AG04450 (cell line): ENCODE measurements at regions of chr10 and their contacts with region 1.

Region 1: DNA sequence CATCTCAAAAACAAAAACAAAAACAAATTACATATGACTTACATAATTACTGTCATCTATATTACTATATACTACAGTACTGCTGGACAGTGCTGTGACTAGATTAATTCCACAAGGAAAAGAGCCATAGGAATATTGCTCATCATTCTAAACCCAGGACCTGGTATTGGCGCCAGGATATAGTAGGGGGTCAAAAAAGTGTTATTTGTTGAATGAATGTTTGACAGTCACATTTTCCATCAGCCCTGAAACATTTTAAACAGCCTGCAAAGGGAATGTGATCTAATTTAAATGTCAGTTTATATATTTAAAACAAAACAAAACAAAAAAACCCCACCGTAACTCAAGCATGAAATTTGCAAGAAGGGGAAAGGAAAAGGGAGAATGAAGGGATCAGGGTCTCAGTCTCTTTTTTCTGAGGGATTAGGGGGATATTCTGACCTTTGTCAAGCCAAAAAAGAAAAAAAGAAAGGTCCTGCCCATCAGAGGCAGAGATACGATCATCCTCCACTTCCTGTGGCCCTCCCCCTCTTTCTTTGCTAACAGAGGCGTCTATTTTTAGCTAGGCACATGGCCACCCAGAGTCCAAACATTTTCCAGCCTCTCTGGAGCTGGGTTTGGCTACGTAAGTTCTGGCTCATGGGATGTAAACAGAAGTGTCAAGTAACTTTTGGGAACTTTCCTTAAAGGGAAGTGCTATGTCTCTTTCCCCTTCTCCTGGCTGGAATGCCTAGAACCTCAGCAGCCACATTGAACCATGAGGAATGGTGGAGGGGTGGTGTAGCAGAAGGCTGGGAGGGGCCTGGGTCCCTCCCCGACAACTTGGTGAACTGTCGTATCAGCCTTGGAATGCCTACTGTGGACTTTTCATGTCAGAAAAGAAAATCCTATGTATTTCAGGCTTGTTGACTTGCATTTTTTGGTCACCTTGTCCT is 44.6 kb upstream of the DLG5 start:
- DNase-seq: peak; percentile 93
- H3K4me3 ChIP-seq: peak overlapping the region; percentile 48
- H3K27ac ChIP-seq: peak overlapping the region; percentile 82
- H3K27me3 ChIP-seq: no peaks in the 10 kb centered on the region
- CTCF ChIP-seq: no peak

Region 2: DNA sequence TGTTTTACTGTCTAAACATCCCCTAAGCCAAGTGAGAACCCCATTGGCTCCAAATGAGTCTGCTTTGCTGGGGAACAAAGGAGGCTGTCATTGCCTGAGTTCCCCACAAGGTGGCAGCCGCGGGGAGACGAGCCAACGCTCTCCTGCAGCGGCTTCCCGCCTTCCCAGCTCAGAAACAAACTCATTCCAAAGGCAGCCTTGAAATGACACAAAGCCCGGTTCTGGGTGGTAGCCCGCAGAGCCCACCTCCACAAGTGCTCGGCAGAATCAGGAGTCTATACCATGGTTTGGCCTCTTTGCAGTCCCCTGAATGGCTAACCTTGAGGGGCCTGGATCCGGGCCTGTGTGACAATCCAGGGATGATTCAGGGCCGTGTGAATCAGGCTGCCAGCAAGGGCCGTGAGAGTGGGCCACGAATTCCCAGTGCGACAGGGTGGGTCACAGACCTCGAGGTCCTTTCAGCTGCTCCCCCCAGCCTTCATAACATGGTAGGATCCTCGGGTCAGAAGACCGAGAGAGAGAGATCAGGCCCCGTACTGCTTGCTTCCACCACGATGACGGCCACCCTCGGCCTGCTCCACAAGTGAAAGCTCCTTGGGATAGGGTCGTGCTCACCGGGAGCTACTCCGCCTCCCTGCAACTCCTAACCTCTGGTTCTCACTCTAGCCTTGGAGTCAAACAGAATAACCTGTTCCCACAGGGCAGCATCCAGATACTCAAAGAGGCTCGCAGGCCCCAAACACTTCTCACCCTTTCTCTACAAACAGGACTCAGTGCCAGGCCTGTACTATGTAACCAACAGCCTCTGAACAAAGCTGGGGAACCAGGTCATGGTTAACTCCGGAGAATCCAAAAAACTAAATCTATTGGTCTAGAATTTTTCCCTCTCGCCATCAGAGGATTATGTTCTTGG is 124.2 kb before region 1 on chr10:
- CTCF ChIA-PET with region 1: interaction called, 11 read pairs
- POLR2A ChIA-PET with region 1: no interaction called
- DNase-seq: peak; percentile 51
- H3K4me3 ChIP-seq: no peak overlapping the region
- H3K27ac ChIP-seq: peak overlapping the region; percentile 39
- H3K27me3 ChIP-seq: no peaks in the 10 kb centered on the region
- CTCF ChIP-seq: peak; percentile 97

Region 3: DNA sequence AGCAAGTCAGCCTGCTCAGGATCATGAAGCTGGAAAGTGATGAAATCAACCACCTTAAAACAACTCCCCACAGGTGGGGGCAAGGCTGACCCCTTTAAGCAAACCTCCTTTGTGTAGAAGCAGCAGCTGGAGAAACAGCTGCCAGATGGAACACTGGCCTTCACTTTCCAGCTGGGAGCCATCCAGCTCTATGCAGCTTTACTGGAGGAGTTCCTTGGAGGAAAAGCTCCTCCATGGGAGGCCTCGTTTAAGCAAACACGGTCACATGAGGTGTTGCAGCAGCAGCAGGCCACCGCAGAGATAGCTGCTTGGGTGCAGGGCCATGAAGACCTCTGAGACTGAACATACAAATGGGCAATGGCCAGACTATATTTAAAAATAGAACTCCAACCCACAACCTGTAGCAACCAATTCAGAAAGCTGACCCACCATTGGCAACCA is 31.6 kb before region 1 on chr10:
- CTCF ChIA-PET with region 1: no interaction called
- POLR2A ChIA-PET with region 1: interaction called, 12 read pairs
- DNase-seq: peak; percentile 78
- H3K4me3 ChIP-seq: no peak overlapping the region
- H3K27ac ChIP-seq: peak overlapping the region; percentile 69
- H3K27me3 ChIP-seq: no peaks in the 10 kb centered on the region
- CTCF ChIP-seq: no peak

Region 4: GRCh38 chr10:78004215-78005026 is 33.3 kb after region 1 on chr10:
- CTCF ChIA-PET with region 1: no interaction called
- POLR2A ChIA-PET with region 1: no interaction called
- DNase-seq: no peak
- H3K4me3 ChIP-seq: no peak overlapping the region
- H3K27ac ChIP-seq: no peak overlapping the region
- H3K27me3 ChIP-seq: no peaks in the 10 kb centered on the region
- CTCF ChIP-seq: no peak